Activated T-helper 1 cell treated with anti-CD3 and anti-CD28 coated beads, Interleukin-12 subunit alpha, Interleukin-12 subunit beta, Interleukin-2, Interleukin-4 antibody, amounts not matched to agents 30 ng/mL and 10 ng/mL and 1 ng/mL, durations not matched to agents 14 hours and 24 hours and 36 hours (primary cell): ENCODE measurements at regions of chr13 and their contacts with region 1.

Region 1: GRCh38 chr13:73715114-73715910 is 418.9 kb downstream of the KLF12 start:
- DNase-seq: peak; percentile 61
- H3K4me3 Mint-ChIP-seq: peak overlapping the region; percentile 55
- H3K27ac Mint-ChIP-seq: peak overlapping the region; percentile 81
- H3K4me1 Mint-ChIP-seq: peaks cover 47% of the 10 kb centered on the region
- H3K27me3 Mint-ChIP-seq: no peaks in the 10 kb centered on the region

Region 2: DNA sequence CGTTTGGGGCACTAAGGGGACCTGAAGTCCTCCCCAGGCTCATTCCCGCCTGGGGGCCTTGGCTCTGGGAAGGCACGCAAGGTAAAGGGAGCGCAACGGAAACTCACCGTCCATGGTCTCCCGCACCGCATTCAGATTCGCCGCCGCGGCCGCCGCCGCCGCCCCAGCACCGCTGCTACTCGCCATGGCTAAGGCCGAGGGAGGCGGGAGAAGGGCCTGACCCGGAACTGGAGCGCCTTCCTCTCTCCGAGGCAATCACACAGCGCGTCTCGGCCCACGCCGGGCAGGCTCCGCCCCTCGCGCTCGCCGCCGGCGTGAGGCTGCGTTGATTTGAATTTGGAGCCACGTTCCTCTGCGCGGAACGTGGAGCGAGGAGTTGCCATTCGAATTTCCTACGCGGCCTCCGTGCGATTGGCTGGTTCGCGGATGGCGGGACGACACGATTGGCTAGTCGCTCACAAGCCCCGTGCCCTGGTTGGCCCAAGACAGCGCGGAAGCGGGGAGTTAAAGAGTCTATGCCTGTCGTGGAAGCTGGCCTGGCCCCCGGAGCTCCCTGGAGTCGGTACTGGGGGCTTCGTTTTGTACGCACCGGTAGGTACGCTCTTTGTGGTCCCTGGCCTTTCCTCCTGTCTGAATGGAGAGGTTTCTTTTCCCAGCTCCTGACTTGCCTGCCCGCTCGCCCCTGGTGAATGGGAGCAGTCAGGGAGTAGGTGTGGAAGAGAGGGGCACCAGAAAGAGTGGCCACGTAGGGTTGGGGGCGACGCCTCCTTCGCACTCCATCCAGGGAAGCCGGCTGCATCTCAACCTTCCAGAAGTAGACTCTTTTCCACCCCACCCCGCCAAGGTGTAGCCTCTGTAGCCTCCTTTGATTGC is 987.7 kb before region 1 on chr13 and contains the starts of genes BORA and MZT1:
- intact Hi-C with region 1: loop called (anchors 5 kb)
- DNase-seq: peak; percentile 97
- H3K4me3 Mint-ChIP-seq: peak within 1 kb of the TSS; percentile 99
- H3K27ac Mint-ChIP-seq: peak within 1 kb of the TSS; percentile 97
- H3K4me1 Mint-ChIP-seq: peaks cover 70% of the 10 kb centered on the region
- H3K27me3 Mint-ChIP-seq: no peaks in the 10 kb centered on the region
- total RNA-seq, gene BORA: 14.6 and 19.4 TPM in 2 replicates
- total RNA-seq, gene MZT1: 21.2 and 22.8 TPM in 2 replicates

Region 3: DNA sequence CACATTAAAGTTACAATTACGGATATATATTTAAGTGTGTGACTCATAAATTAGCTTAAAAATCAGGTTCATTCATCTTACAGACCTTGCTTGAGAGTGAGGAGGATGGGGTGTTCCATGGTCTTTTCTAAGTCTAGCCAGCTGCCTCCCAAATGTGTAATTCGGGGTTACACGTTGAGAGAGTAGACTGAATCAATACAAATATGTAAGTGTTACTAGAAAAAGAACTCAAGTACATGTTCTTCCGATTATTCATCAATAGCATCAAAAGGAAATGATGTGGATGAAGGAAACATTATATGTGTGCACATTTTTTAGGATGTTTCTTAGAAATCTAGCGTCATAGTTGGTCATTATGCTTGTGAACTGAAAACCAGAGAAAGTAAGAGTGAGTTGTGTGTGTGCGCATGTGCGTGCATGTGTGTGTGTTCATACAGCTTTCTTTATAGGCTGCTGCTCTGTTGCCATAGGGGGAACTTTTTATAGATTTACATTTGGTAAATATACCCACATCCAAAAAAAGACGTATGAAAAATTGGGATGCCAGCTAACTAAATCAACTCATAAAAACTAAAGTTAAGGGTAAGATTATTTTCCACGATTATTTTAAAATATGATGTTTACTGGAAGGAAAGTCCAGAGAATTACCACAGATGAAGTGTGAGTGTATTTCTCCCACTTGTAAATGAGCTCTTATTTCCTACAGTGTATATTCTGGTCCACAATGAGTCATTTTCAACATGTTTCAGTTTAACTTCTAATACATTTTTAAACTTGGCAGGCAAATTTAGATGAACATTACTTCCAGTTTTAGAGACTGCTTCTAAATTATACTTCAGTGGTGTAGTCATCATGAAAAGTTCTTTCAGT is 850.9 kb before region 1 on chr13:
- intact Hi-C with region 1: loop called (anchors 1 kb)
- DNase-seq: no peak
- H3K4me3 Mint-ChIP-seq: no peak overlapping the region
- H3K27ac Mint-ChIP-seq: peak overlapping the region; percentile 82
- H3K4me1 Mint-ChIP-seq: peaks cover 12% of the 10 kb centered on the region
- H3K27me3 Mint-ChIP-seq: no peaks in the 10 kb centered on the region

Region 4: DNA sequence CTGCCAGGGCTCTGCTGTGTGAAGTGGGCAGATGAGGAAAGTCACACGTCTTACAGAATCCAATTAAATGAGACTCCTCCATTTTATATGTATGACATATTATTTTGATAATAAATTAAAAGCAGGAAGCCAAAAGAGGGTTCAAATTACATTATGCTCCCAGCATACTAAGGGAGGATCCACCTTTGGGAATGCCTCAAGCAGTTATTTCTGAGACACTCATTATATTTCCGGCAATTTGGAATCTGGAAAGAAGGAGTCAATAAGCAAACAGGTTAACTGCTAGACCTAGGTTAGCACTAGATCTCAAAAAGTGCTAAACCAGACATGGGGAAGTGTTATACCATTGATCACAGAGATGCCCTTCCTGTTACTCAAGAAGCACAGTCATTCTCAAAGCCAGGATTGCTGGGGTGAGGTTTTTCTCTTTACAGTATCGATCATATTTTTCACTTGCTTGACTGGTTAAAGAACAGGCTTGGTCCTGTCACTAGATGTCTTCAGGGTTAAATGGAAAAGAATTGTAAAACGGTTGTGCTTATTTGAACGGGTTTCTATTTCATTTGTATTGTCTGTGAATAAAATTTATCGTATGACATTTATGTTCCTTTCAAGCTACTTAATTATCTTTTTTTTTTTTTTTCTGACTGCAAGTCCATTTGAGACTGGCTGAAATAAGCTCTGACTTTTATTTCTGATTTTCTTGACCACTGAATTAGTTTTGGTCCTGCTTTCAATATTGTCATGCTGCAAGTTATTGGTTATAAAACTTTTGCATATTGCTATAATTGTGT is 104.3 kb before region 1 on chr13:
- intact Hi-C with region 1: loop called (anchors 5 kb)
- DNase-seq: no peak
- H3K4me3 Mint-ChIP-seq: no peak overlapping the region
- H3K27ac Mint-ChIP-seq: no peak overlapping the region
- H3K4me1 Mint-ChIP-seq: peaks cover 13% of the 10 kb centered on the region
- H3K27me3 Mint-ChIP-seq: no peaks in the 10 kb centered on the region

Region 5: DNA sequence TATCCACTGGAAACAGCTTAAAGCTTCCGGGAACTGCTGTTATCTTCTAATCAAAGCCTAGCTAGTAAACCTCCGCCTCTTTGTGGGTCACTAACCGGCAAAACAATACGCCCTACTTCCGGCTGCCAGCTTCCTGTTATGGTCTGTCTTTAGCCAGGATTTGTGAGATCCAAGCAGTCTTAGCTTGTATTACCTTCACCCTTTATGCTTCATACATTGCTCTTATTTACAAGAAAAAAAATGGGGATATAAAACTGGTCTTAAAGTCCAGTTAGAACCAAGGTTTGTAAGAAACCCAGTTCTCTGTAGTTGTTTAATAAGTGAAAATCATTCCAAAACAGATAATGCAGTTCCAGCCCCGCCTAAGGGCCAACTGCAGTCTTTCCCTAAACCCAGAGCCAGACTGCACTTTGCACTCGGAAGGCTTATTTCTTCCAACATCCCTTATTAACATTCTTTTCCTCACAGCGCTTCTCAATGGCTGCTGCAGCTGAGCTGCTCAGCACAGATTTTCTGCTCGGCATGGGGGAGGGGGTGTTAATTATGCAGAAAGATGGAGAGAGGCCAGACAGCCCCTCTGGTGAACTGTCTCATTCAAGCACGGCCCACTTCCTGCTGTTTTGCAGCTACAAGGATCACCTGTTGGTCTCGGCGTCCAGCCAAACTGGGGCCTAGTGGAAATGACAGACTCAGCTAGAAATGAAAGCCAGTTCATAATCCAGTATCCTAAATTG is 50.5 kb after region 1 on chr13:
- intact Hi-C with region 1: loop called (anchors 2 kb)
- DNase-seq: peak; percentile 43
- H3K4me3 Mint-ChIP-seq: peak overlapping the region; percentile 69
- H3K27ac Mint-ChIP-seq: peak overlapping the region; percentile 83
- H3K4me1 Mint-ChIP-seq: peaks cover 46% of the 10 kb centered on the region
- H3K27me3 Mint-ChIP-seq: no peaks in the 10 kb centered on the region

Region 6: GRCh38 chr13:74243637-74244526 is 528.6 kb after region 1 on chr13:
- intact Hi-C with region 1: loop called (anchors 2 kb)
- DNase-seq: no peak
- H3K4me3 Mint-ChIP-seq: peak overlapping the region; percentile 60
- H3K27ac Mint-ChIP-seq: peak overlapping the region; percentile 82
- H3K4me1 Mint-ChIP-seq: peaks cover 32% of the 10 kb centered on the region
- H3K27me3 Mint-ChIP-seq: peaks cover 2% of the 10 kb centered on the region

Region 7: GRCh38 chr13:75489502-75490263 is 1774.4 kb after region 1 on chr13:
- intact Hi-C with region 1: loop called (anchors 5 kb)
- DNase-seq: no peak
- H3K4me3 Mint-ChIP-seq: no peak overlapping the region
- H3K27ac Mint-ChIP-seq: peak overlapping the region; percentile 20
- H3K4me1 Mint-ChIP-seq: peaks cover 30% of the 10 kb centered on the region
- H3K27me3 Mint-ChIP-seq: peaks cover 12% of the 10 kb centered on the region